ENCODE measurements at regions of chr22 and their contacts with region 1.

Region 1: GRCh38 chr22:32185821-32186220 is 19.1 kb downstream of the RFPL2 start:
- DNase-seq: no peak
- ATAC-seq: no peak
- H3K4me3 ChIP-seq: no peak overlapping the region
- H3K27ac ChIP-seq: no peak overlapping the region
- H3K4me1 ChIP-seq: no peaks in the 10 kb centered on the region
- H3K27me3 ChIP-seq: peaks cover 0 to 37% (median under 1%) of the 10 kb centered on the region in 7 donors
- CTCF ChIP-seq: no peak

Region 2: GRCh38 chr22:32216911-32217310 is 31.1 kb after region 1 on chr22:
- intact Hi-C with region 1: loop called in 1 of 10 experiments (anchors 1 kb)
- DNase-seq: no peak
- ATAC-seq: no peak
- H3K4me3 ChIP-seq: no peak overlapping the region
- H3K27ac ChIP-seq: no peak overlapping the region
- H3K4me1 ChIP-seq: peaks cover 0 to 8% (median 0%) of the 10 kb centered on the region in 9 donors
- H3K27me3 ChIP-seq: peaks cover 0 to 9% (median 0%) of the 10 kb centered on the region in 7 donors
- CTCF ChIP-seq: no peak

Measured in heart right ventricle (tissue), 16 donors.